ENCODE measurements at regions of chr13 and their contacts with region 1.

Region 1: GRCh38 chr13:90039516-90039915 is 1308.0 kb upstream of the MIR17HG start:
- DNase-seq: no peak
- ATAC-seq: no peak
- H3K4me3 ChIP-seq: no peak overlapping the region
- H3K27ac ChIP-seq: no peak overlapping the region
- H3K4me1 ChIP-seq: no peaks in the 10 kb centered on the region
- H3K27me3 ChIP-seq: no peaks in the 10 kb centered on the region
- CTCF ChIP-seq: no peak

Region 2: DNA sequence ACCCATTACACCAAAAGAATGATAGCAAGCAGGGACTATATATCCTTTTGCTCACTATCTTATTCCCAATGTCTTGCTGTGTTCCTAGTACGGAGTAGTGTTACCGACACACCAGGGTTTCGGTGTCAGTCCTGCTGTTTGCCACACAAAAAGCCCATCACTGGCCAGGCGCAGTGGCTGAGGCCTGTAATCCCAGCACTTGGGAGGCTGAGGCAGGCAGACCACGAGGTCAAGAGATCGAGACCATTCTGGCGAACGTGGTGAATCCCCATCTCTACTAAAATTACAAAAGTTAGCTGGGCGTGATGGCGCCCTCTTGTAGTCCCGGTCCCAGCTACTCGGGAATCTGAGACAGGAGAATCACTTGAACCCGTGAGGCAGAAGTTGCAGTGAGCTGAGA is 159.3 kb before region 1 on chr13:
- intact Hi-C with region 1: no loop called
- DNase-seq: no peak
- ATAC-seq: no peak
- H3K4me3 ChIP-seq: no peak overlapping the region
- H3K27ac ChIP-seq: no peak overlapping the region
- H3K4me1 ChIP-seq: no peaks in the 10 kb centered on the region
- H3K27me3 ChIP-seq: no peaks in the 10 kb centered on the region
- CTCF ChIP-seq: no peak

Region 3: DNA sequence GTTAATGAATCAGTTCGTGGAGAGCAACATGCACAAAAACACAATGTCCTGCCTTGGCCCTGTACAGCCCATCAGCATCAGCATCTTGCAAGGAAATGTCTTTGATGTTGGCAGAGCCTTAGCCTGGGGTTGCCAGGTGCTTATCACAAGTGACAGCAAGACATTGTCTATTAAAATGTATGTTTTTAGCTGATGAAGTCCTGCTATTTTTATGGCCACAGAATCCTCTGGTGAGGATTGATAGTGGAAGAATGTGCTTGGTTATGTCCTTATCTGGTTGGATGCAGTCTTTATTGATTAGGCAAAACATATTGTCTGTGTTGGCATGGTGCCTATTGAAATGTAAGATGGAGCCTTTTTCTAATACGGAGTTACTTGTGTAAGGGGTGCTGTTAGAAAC is 119.1 kb before region 1 on chr13:
- intact Hi-C with region 1: no loop called
- DNase-seq: no peak
- ATAC-seq: no peak
- H3K4me3 ChIP-seq: no peak overlapping the region
- H3K27ac ChIP-seq: no peak overlapping the region
- H3K4me1 ChIP-seq: no peaks in the 10 kb centered on the region
- H3K27me3 ChIP-seq: no peaks in the 10 kb centered on the region
- CTCF ChIP-seq: no peak

Region 4: DNA sequence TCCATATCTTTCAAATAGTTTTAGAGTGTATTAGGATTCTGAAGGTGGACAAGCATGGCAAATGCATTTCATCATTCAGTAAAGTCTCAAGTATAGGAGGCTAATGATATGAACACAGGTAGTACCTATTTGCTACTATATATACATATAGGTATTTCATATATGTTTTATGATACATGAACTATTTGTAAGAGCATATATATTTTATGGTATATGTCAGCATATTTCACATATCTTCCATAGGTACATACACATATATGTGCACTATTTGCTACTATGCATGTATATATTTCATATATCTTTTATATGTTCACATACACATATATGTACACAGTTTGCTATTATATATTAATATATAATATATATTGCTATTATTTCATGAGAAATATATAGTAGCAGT is 16.2 kb after region 1 on chr13:
- intact Hi-C with region 1: loop called in 1 of 2 experiments (anchors 2 kb)
- DNase-seq: no peak
- ATAC-seq: no peak
- H3K4me3 ChIP-seq: no peak overlapping the region
- H3K27ac ChIP-seq: no peak overlapping the region
- H3K4me1 ChIP-seq: no peaks in the 10 kb centered on the region
- H3K27me3 ChIP-seq: no peaks in the 10 kb centered on the region
- CTCF ChIP-seq: no peak

Region 5: GRCh38 chr13:90171649-90172048 is 132.1 kb after region 1 on chr13:
- intact Hi-C with region 1: no loop called
- DNase-seq: no peak
- ATAC-seq: no peak
- H3K4me3 ChIP-seq: no peak overlapping the region
- H3K27ac ChIP-seq: no peak overlapping the region
- H3K4me1 ChIP-seq: no peaks in the 10 kb centered on the region
- H3K27me3 ChIP-seq: no peaks in the 10 kb centered on the region
- CTCF ChIP-seq: no peak

Measured in psoas muscle (tissue), 8 donors.